Right ventricle myocardium inferior (tissue), 1 donor: ENCODE measurements at regions of chr4 and their contacts with region 1.

Region 1: DNA sequence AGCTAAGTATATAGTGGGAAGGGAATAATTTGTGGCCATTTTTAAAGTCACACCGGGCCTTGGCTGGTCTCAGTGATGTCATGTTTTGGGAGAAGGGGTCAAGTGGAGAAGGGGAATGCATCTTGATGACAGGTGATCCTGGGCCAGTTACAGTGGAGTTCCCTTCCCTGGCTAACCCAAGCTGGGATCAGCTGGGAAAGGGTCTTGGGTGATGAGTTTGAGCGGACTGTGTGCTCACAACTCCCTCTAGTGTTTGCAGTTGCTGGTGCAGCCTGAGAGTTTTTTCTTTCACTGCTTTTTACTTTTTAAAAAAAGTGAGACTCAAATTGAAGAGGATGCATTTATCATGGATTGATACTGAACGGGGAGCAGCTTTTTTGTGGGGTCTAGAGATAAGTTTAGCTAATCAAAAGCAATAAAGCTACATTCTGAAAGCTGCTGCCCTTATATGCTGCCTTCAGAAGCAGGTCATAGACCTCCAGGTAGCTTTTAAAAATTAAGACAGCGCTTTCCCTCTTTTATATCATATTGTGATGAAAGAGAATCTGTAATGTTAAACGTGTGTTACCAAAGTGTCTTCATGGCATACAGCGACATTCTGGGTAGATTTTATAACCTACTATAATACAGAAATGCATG is 164.7 kb downstream of the DCLK2 start:
- DNase-seq: no peak
- ATAC-seq: peak; percentile 28

Region 2: GRCh38 chr4:149605601-149606378 is 637.1 kb before region 1 on chr4:
- intact Hi-C with region 1: no loop called
- DNase-seq: no peak
- ATAC-seq: no peak

Region 3: DNA sequence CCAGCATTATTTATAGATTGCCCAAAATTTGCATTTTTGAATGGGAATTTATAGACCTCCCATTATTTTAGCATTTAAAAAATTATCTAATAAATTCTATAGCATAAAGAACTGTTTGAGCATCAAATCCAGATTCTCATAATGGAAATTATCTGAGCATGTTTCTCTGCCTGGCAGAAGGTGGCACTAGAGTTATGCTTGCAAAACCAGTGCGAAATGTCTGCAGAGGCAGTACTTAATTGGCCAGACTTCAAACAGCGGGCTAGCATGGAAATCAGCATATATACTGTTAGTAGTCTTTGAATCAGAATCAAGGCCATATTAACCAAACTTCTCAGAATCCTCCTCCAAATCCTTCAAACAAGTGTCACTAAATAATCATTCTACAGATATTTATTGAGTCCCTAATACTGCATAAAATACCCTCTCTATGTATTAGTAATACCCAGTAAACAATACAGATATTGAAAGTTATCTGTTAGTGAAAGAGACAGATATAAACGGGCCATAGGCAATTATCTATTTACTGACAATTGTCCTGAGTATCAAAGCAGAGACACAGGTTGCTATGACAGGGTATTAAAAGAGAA is 243.4 kb before region 1 on chr4:
- intact Hi-C with region 1: loop called (anchors 2 kb)
- DNase-seq: no peak
- ATAC-seq: peak; percentile 76

Region 4: DNA sequence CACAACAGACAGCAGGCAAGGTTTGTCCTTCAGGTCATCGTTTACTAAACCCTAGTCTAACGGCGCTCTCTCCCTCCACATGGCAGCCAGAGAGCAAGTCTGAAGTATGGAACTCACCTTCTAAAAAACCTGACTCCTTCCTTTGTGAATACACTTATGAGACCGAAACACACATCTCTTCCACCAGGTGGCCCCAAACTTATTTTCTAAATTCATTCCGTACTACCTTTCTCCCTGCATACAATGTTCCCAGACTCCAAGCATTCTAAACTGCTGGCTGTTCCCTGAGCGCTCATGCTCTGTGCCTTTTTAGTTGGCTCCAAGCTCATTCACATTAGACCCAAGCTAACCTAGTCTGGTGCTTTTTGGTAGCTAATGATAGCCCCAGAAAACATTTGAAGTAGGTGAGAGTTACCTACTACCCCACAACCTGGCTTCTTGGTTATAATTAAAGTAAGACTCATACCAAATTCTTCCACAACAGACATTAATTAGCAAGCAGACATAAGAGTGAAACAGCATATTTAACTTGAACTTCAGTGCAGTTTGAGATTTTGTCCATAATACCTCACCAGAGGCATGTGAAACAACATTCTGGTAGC is 232.3 kb before region 1 on chr4:
- intact Hi-C with region 1: loop called (anchors 2 kb)
- DNase-seq: no peak
- ATAC-seq: peak; percentile 77

Region 5: DNA sequence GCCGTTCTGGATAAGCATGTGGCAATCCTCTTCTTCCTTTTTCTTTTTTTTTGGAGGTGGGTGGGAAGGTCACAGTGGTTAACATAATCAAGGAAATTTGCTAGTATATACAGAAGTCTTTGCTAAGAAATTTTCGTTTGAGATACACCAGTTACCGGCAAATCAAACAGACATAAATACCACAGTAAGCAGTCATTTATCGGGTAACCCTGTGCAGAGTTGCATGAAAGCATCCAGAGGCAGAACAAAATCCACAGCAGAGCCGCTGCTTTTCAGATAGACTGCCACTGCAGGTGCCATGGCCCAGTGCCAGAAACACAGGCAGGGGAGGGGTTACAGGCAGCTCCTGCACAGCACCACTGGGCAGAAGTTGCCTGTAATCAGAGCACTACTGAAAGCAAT is 159.9 kb after region 1 on chr4:
- intact Hi-C with region 1: no loop called
- DNase-seq: peak; percentile 55
- ATAC-seq: peak; percentile 59

Region 6: GRCh38 chr4:150415213-150415612 is 172.3 kb after region 1 on chr4:
- intact Hi-C with region 1: no loop called
- DNase-seq: no peak
- ATAC-seq: no peak